PC-3 (cell line): ENCODE measurements at regions of chr19 and their contacts with region 1.

Region 1: GRCh38 chr19:15418588-15419412 is at the start of gene AKAP8L:
- DNase-seq: peak; percentile 99
- ATAC-seq: peak; percentile 92
- H3K4me3 ChIP-seq: peak within 1 kb of the TSS; percentile 97
- H3K27ac ChIP-seq: peak within 1 kb of the TSS; percentile 45
- H3K4me1 ChIP-seq: peaks cover 23% of the 10 kb centered on the region
- H3K27me3 ChIP-seq: no peaks in the 10 kb centered on the region
- CTCF ChIP-seq: peak; percentile 64
- total RNA-seq, gene AKAP8L: 97.9 and 137 TPM in 2 replicates

Region 2: GRCh38 chr19:14689598-14690503 is 728.9 kb before region 1 on chr19 and contains the start of gene ZNF333:
- CTCF ChIA-PET with region 1: no interaction called
- POLR2A ChIA-PET with region 1: interaction called, 10 read pairs
- intact Hi-C with region 1: no loop called
- DNase-seq: peak; percentile 90
- ATAC-seq: peak; percentile 96
- H3K4me3 ChIP-seq: peak within 1 kb of the TSS; percentile 96
- H3K27ac ChIP-seq: peak within 1 kb of the TSS; percentile 88
- H3K4me1 ChIP-seq: peaks cover 7% of the 10 kb centered on the region; the same call in 1 of the 2 replicates
- H3K27me3 ChIP-seq: no peaks in the 10 kb centered on the region
- CTCF ChIP-seq: no peak
- total RNA-seq, gene ZNF333: 6.2 and 11.6 TPM in 2 replicates

Region 3: GRCh38 chr19:15251749-15252397 is 166.9 kb before region 1 on chr19:
- CTCF ChIA-PET with region 1: no interaction called
- POLR2A ChIA-PET with region 1: no interaction called
- intact Hi-C with region 1: no loop called
- DNase-seq: peak; percentile 55
- ATAC-seq: peak; percentile 36
- H3K4me3 ChIP-seq: no peak overlapping the region
- H3K27ac ChIP-seq: peak overlapping the region; percentile 60
- H3K4me1 ChIP-seq: peaks cover 31% of the 10 kb centered on the region
- H3K27me3 ChIP-seq: no peaks in the 10 kb centered on the region
- CTCF ChIP-seq: peak; percentile 55

Region 4: GRCh38 chr19:15264061-15264932 is 154.5 kb before region 1 on chr19:
- CTCF ChIA-PET with region 1: no interaction called
- POLR2A ChIA-PET with region 1: no interaction called
- intact Hi-C with region 1: loop called (anchors 10 kb)
- DNase-seq: peak; percentile 73
- ATAC-seq: peak; percentile 10; the same call in 1 of the 2 replicates
- H3K4me3 ChIP-seq: no peak overlapping the region
- H3K27ac ChIP-seq: no peak overlapping the region
- H3K4me1 ChIP-seq: 0 out of 2 replicates have a peak, but pooled peaks cover 6% of the 10 kb centered on the region
- H3K27me3 ChIP-seq: no peaks in the 10 kb centered on the region
- CTCF ChIP-seq: peak; percentile 91

Region 5: DNA sequence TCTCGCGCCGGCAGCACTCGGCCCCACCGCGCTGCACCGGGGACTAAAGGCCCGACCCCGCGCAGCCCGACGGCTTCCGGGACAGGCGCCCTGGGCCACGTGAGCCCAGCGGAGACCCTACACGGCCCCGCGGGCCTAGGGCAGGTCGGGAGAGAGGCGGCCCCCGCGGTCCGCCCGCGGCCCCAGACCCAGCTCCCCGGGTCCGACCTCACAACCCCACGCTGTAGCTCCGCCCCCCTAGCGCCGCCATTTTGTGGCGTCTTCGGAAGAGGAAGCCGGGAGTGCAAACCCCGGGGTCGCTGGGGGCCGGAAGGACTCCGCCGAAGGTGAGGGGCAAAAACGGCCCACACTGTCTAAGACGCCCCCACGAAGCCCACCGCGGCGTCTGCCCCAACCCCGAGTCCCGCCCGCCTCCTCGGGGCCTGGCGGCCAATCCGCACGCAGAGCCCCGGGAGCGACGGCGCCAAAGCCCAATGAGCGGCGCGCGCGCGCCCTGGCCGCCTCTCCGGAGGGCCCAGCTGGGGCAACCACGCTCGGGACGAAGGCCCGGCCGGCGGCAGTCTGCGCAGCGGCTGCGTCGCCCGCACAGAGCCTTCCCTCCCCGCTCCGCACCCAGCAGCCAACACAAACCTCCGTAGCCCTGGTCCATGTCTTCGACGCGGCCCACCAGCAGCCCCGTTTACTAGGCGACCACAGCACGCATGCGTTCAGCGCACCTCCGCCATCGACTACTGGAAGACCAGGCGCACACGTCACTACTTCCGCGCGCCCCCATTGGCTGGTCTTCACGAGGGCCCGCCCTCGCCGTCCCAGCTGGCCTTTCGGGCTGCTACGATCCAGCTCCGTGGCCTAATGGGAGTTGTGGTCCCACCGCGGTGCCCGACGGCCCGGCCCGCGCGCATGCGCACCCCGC is 39.5 kb before region 1 on chr19 and contains the start of gene AKAP8:
- CTCF ChIA-PET with region 1: no interaction called
- POLR2A ChIA-PET with region 1: interaction called, 23 read pairs
- intact Hi-C with region 1: loop called (anchors 1 kb)
- DNase-seq: peak; percentile 99
- ATAC-seq: peak; percentile 87
- H3K4me3 ChIP-seq: peak within 1 kb of the TSS; percentile 88
- H3K27ac ChIP-seq: peak within 1 kb of the TSS; percentile 85
- H3K4me1 ChIP-seq: peaks cover 21% of the 10 kb centered on the region
- H3K27me3 ChIP-seq: no peaks in the 10 kb centered on the region
- CTCF ChIP-seq: no peak
- total RNA-seq, gene AKAP8: 36.3 and 48.0 TPM in 2 replicates

Region 6: GRCh38 chr19:15404097-15404779 is 14.6 kb before region 1 on chr19:
- CTCF ChIA-PET with region 1: no interaction called
- POLR2A ChIA-PET with region 1: no interaction called
- intact Hi-C with region 1: no loop called
- DNase-seq: no peak
- ATAC-seq: no peak
- H3K4me3 ChIP-seq: no peak overlapping the region
- H3K27ac ChIP-seq: no peak overlapping the region
- H3K4me1 ChIP-seq: no peaks in the 10 kb centered on the region
- H3K27me3 ChIP-seq: no peaks in the 10 kb centered on the region
- CTCF ChIP-seq: no peak

Region 7: DNA sequence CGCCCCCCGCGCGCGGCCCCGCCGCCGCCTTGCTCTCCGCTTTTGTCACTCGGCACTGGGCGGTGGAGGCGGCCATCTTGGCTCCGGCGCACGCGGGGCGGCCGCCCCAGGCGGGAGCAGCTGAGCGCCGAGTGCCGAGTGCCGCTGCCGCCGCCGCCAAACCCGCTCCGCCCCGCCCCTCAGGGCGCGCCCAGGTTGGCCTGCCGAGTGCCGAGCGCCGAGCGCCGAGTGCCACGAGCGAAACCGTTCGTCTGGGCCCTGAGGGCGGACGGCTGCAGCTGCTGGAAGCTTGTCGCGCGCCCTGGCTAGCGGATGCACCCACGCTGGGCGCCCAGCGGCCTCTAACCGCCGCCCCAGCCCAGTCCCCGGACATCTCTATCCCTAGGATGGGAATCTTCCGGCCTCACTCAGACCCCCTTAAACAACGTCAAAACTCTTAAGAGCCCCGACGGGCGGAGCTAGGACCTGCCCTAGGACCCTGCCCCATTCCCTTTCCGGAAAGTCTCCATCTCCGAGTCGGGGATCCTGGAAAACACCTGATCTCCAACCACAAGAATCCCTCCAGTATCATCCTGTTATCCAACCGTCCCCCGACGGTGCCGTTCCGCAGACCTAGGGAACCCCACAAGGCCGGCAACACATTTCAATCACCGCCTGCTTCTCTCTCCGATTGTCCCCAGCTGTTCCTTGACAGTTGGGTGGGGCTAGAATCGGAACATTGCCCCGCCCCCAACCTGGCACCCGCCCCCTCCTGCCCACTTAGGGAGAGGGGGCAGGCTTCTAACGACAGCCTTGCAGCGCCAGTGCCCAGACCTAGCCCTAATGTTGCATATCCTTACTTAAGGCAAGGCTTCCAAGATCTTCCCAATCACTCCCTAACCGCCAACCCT is 14.1 kb after region 1 on chr19:
- CTCF ChIA-PET with region 1: no interaction called
- POLR2A ChIA-PET with region 1: interaction called, 13 read pairs
- intact Hi-C with region 1: no loop called
- DNase-seq: peak; percentile 90
- ATAC-seq: peak; percentile 81
- H3K4me3 ChIP-seq: peak overlapping the region; percentile 71
- H3K27ac ChIP-seq: no peak overlapping the region
- H3K4me1 ChIP-seq: peaks cover 21% of the 10 kb centered on the region
- H3K27me3 ChIP-seq: no peaks in the 10 kb centered on the region
- CTCF ChIP-seq: no peak

Region 8: DNA sequence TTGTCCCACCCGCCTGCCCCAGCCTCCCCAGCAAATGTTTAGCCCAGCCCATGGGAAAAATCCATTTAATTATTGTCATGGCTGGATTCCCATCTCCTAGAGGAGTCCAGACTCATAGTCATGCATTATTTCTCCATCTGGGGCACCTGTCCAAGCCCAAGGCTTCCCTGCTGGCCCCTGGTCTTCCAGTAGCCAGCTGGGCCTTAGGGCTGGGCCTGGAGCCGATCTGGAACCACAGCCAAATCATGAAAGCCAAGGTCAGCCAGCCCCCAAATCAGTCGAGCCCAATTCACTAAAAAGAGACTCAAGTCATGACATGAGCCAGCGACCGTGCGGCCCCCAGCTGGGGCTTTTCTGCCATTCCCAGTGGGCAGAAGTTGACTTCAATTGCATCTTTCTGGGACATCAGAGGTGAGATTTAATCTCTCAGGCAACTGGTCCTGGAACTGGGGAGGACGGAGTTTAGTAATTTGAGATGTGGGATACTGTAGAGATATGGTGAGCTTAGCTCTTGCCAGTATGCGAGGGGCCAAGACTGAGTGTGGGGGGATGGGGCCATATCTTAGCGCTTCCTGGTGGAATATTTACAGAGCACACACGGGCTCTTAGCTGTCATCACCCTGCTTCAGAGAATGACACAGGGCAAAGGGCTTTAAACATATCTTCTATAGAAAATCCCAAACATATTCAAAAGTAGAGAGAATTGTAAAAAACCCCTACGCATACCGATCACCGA is 69.9 kb after region 1 on chr19:
- CTCF ChIA-PET with region 1: no interaction called
- POLR2A ChIA-PET with region 1: no interaction called
- intact Hi-C with region 1: no loop called
- DNase-seq: no peak
- ATAC-seq: no peak
- H3K4me3 ChIP-seq: no peak overlapping the region
- H3K27ac ChIP-seq: no peak overlapping the region
- H3K4me1 ChIP-seq: no peaks in the 10 kb centered on the region
- H3K27me3 ChIP-seq: no peaks in the 10 kb centered on the region
- CTCF ChIP-seq: no peak